GM18951 (cell line): ENCODE measurements at regions of chr12 and their contacts with region 1.

Region 1: DNA sequence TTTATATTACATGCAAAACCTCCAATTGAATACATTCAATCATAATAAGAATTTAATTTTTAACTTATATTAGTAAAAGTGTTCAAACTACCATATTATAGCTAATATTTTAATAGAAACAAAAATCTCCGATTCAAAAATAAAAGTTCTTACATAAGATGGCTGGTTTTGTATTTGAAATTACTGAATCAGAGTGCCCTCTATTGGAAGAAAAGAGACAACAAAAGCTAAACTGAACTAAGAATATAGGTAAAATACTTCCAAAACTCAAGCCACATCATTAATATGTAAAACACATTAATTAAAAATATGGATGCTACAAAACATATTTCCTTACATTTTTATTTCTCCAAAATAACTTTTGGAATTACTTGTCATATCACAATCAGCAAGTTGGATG is 120.3 kb downstream of the GARIN6 start:
- POLR2A ChIP-seq: no peak

Region 2: DNA sequence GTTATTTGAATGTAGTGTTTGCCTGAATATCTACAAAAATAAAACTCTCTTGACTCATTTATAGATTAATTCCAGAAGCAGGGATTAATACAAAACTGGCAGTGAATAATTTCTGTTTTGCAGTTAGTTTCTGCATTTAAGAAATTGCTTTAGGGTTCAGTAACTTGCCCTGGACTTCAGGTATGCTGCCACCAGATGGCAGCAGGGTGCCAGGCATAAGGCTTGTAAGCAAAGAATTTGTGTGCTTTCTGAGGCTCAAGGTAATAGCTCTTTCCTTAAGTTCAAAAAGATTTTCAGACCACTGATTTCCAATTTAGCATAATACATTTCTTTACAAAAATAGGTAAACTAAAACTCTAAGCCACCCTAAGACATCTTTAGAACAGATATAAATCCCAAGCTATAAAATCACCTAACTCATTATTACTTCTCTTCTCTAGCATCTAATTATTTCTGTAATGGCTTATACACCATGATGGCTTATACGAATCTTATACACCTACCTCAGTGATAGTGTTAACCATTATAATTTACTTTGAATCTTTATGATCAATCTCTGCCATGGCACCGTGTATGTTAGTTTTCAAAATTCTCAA is 724.4 kb before region 1 on chr12:
- in situ Hi-C with region 1: loop called (anchors 25 kb)
- POLR2A ChIP-seq: no peak

Region 3: DNA sequence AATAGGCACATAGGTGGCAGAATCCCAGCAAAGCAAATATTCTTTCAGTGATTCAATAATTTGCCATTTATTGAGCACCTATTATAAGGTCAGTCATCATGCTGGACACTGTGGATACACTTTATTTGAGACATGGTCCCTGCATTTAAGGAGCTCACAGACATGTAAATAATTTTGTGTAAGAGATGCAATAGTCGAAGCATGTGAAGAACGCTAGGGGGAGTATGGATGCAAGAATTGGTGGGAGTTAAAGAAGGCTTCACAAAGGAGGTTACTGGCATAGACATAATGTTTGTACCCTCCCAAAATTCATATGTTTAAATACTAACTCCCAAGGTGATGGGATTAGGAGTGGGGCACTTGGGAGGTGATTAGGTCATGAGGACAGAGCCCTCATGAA is 380.9 kb before region 1 on chr12:
- in situ Hi-C with region 1: loop called (anchors 25 kb)
- POLR2A ChIP-seq: no peak